Heart left ventricle (tissue), 16 donors: ENCODE measurements at regions of chr4 and their contacts with region 1.

Region 1: DNA sequence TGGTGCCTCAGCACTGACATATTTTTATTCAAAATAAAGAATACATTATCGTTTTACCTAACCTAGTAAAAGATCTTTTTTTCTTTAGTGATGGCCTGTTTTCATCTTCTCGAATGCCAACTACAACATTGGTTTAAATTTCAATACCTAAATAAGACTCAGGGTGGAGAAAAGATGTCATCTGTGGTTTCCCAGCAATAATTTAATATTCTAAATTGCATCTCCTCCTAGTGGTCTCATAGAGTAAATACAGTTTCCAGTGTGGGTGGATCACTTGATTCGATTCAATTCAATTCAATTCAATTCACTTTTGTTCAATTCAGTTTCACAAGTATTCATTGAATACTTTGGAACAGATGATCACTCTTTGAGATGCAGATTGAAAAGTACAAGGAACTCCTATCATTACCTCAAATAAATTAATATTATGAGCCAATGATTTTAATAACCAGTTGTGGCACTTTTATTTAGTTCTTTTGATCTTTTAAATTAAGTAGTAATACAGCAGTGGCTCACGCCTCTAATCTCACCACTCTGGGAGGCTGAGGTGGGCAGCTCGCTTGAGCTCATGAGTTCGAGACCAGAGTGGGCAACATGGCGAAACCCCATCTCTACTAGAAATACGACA is 427.2 kb downstream of the FAT4 start:
- DNase-seq: no peak
- ATAC-seq: no peak
- H3K4me3 ChIP-seq: no peak overlapping the region
- H3K27ac ChIP-seq: no peak overlapping the region
- H3K4me1 ChIP-seq: peaks cover 0 to 21% (median 9%) of the 10 kb centered on the region in 12 donors
- H3K27me3 ChIP-seq: no peaks in the 10 kb centered on the region
- CTCF ChIP-seq: peak; percentile 42 to 70 (median 60)
- POLR2A ChIP-seq: no peak

Region 2: GRCh38 chr4:125432104-125432503 is 309.8 kb before region 1 on chr4:
- intact Hi-C with region 1: loop called in 3 of 10 experiments (anchors 5 to 10 kb)
- DNase-seq: peak in 2 of 5 donors; percentile 27 to 36
- ATAC-seq: peak; percentile 61 to 86 (median 78)
- H3K4me3 ChIP-seq: no peak overlapping the region
- H3K27ac ChIP-seq: no peak overlapping the region
- H3K4me1 ChIP-seq: peaks cover 0 to 18% (median 0%) of the 10 kb centered on the region in 12 donors
- H3K27me3 ChIP-seq: no peaks in the 10 kb centered on the region
- CTCF ChIP-seq: peak in 9 of 12 donors; percentile 27 to 51 (median 40)
- POLR2A ChIP-seq: no peak

Region 3: DNA sequence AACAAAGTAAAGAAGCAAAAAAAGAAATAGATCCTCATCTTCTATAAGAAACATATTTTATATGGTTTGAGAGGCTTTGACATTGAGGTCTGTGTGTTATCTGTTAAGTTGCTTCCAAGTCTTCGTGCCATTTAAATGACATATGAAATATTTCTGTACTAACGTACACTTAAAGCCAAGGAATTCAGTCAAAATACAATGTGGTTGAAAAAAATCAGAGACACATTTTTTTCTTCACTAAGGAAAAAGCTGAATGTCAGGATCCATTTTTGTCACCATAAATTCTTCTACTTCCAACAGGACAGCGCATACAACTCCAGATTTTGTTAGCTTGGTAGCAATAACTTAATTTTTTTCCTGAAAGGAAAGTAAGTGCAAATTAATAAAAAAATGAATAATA is 258.7 kb before region 1 on chr4:
- intact Hi-C with region 1: loop called in 1 of 10 experiments (anchors 10 kb)
- DNase-seq: no peak
- ATAC-seq: no peak
- H3K4me3 ChIP-seq: no peak overlapping the region
- H3K27ac ChIP-seq: no peak overlapping the region
- H3K4me1 ChIP-seq: no peaks in the 10 kb centered on the region
- H3K27me3 ChIP-seq: no peaks in the 10 kb centered on the region
- CTCF ChIP-seq: no peak
- POLR2A ChIP-seq: no peak

Region 4: DNA sequence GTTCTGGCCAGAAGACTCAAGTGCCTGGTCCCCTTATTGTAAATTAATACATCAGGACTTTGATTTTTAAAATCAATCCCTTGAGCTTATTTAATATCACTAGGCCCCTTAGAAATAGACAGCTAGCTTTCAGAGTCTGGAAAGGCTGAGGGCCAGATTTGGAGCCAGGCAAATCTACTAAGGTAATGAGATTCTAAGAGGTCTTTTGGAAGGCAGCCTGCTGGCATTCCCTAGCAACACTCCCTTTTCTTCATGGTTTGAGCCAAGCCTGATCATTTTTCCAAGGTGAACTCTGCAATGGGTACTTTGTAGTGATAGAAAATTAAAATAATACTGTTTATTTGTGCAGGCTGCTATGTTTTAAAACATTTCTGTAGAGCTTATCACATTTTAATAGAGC is 48.7 kb before region 1 on chr4:
- intact Hi-C with region 1: no loop called
- DNase-seq: no peak
- ATAC-seq: no peak
- H3K4me3 ChIP-seq: no peak overlapping the region
- H3K27ac ChIP-seq: no peak overlapping the region
- H3K4me1 ChIP-seq: no peaks in the 10 kb centered on the region
- H3K27me3 ChIP-seq: no peaks in the 10 kb centered on the region
- CTCF ChIP-seq: no peak
- POLR2A ChIP-seq: no peak